ENCODE measurements at regions of chr1 and their contacts with region 1.

Region 1: DNA sequence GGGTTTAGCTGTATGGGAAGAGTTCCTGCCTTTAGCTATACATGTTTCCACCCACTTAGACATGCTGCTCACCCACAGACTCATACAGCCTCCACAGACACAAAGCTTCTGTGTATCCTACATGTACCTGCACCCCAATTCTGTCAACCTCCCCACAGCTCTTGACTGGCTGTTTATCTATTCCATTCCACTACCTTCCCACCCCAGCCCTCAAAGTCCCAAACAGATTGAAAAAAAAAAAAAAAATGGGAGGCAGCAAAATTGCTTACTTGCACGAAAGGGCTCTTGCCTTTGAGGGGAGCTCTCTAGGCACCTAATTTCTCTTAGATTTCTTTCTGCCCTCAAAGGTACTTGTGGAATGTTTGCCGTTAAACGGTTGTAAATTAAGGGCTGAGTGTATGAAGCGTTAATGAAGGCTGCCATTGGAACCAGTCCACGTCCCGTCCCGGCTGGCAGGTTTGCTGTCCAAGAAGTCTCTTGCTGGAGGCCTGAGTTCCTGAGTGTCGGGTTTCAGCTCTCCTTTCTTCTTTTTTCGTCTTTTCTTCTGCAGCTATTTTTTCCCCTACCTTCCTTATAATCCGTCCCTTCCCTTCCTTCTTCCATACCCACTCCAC is 43.6 kb downstream of the PBX1 start:
- DNase-seq: peak; percentile 35 to 73
- ATAC-seq: peak; percentile 39 to 82 (median 61)
- H3K4me3 ChIP-seq: peak overlapping the region; percentile 14
- H3K27ac ChIP-seq: peak overlapping the region; percentile 55
- H3K4me1 ChIP-seq: peaks cover 37% of the 10 kb centered on the region
- H3K27me3 ChIP-seq: no peaks in the 10 kb centered on the region
- CTCF ChIP-seq: no peak

Region 2: GRCh38 chr1:164534863-164535610 is 67.5 kb before region 1 on chr1:
- intact Hi-C with region 1: no loop called
- DNase-seq: no peak
- ATAC-seq: no peak
- H3K4me3 ChIP-seq: no peak overlapping the region
- H3K27ac ChIP-seq: no peak overlapping the region
- H3K4me1 ChIP-seq: no peaks in the 10 kb centered on the region
- H3K27me3 ChIP-seq: no peaks in the 10 kb centered on the region
- CTCF ChIP-seq: no peak

Region 3: GRCh38 chr1:164565357-164565756 is 37.2 kb before region 1 on chr1:
- intact Hi-C with region 1: loop called (anchors 5 kb)
- DNase-seq: no peak
- ATAC-seq: peak in 1 of 4 donors; percentile 26
- H3K4me3 ChIP-seq: peak overlapping the region; percentile 85
- H3K27ac ChIP-seq: no peak overlapping the region
- H3K4me1 ChIP-seq: peaks cover 30% of the 10 kb centered on the region
- H3K27me3 ChIP-seq: no peaks in the 10 kb centered on the region
- CTCF ChIP-seq: no peak

Region 4: DNA sequence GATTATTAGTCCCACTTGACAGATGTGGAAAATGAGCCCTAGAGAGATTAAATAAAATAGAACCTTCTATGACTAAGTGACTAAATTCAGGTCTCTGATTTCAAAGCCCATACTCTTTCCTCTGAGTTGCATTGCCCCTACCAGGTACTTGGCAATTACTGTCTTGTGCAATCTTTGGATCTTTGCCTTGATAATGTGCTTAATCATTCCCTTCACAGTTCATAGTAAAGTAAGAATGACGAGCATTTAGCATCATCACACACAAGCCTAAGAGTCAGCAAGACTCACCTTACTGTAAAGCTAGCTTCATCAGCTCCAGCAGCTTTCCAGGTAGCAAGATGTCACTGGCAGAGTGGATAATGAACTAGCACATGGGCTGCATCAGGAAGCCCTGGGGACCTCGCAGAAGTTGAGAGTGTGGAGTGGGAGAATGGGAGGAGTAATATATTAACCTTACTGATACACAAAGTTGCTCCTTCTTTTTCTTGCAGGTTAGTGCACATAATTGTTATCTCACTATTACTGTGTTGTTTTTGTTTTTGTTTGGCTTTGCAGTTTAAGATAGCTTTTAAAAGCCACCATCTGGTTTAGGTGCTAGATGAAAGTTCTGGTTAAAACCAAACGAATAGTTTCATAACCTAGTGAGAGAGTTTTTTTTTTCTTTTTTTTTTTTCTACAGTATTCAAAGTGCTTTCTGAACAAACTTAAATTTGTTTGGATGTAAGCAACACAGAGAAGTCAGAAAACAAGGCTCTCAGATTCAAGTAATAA is 28.2 kb after region 1 on chr1:
- intact Hi-C with region 1: no loop called
- DNase-seq: no peak
- ATAC-seq: peak; percentile 75 to 94 (median 88)
- H3K4me3 ChIP-seq: no peak overlapping the region
- H3K27ac ChIP-seq: peak overlapping the region; percentile 67
- H3K4me1 ChIP-seq: peaks cover 57% of the 10 kb centered on the region
- H3K27me3 ChIP-seq: no peaks in the 10 kb centered on the region
- CTCF ChIP-seq: no peak

Region 5: GRCh38 chr1:164876398-164877116 is 274.0 kb after region 1 on chr1:
- intact Hi-C with region 1: no loop called
- DNase-seq: no peak
- ATAC-seq: no peak
- H3K4me3 ChIP-seq: no peak overlapping the region
- H3K27ac ChIP-seq: no peak overlapping the region
- H3K4me1 ChIP-seq: no peaks in the 10 kb centered on the region
- H3K27me3 ChIP-seq: no peaks in the 10 kb centered on the region
- CTCF ChIP-seq: no peak